PC-3 (cell line): ENCODE measurements at regions of chr4 and their contacts with region 1.

Region 1: GRCh38 chr4:63831590-63832155 is 577.6 kb downstream of the TECRL start:
- DNase-seq: no peak
- ATAC-seq: no peak
- H3K4me3 ChIP-seq: no peak overlapping the region
- H3K27ac ChIP-seq: no peak overlapping the region
- H3K4me1 ChIP-seq: no peaks in the 10 kb centered on the region
- H3K27me3 ChIP-seq: no peaks in the 10 kb centered on the region
- CTCF ChIP-seq: no peak

Region 2: GRCh38 chr4:63851496-63851895 is 19.8 kb after region 1 on chr4:
- CTCF ChIA-PET with region 1: no interaction called
- POLR2A ChIA-PET with region 1: no interaction called
- intact Hi-C with region 1: loop called (anchors 2 kb)
- DNase-seq: peak; percentile 38
- ATAC-seq: peak; percentile 99
- H3K4me3 ChIP-seq: no peak overlapping the region
- H3K27ac ChIP-seq: no peak overlapping the region
- H3K4me1 ChIP-seq: no peaks in the 10 kb centered on the region
- H3K27me3 ChIP-seq: no peaks in the 10 kb centered on the region
- CTCF ChIP-seq: no peak